Naive thymus-derived CD4-positive, alpha-beta T cell (primary cell): ENCODE measurements at regions of chr3 and their contacts with region 1.

Region 1: DNA sequence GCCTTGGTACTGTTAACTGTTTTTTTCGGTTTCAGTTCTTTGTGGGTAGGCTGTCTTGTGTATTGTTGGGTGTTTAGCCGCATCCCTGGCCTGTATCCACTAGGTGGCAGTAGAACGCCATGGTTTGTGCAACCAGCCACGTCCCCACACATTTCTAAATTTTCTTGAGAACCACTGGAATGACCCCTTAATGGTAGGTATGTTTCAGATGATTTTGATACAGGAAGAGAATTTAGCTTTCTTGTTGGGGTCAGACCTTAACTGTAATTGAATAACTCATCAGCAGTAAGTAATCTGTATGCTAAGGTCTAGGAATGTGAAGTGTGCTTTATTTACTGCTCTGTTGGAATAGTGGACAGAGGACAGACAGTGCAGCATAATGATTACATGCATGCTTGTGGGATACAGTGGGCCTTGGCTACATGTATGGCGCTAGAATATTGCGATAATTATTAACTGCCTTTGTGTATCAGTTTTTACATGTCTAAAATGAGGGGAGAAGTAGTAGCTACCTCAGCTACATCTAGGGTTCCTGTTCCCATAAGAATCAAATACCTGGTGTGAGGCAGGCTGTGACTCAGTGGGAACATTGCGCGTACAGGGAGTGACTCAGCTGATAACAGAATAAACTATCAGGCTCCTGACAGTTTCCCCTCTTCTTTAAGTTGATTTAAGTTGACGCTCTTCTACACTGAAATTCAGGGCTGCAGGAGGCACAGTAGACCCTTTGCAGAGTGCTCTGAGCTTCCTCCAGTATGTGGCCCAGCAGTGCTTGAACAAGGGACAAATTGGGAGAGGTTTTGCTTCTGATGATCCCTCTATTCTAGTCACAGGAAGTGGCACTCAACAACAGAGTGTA is 25.0 kb upstream of the GPR171 start:
- DNase-seq: peak; percentile 47 to 84 (median 77)
- ATAC-seq: peak; percentile 93
- H3K4me3 ChIP-seq: no peak overlapping the region
- H3K4me3 Mint-ChIP-seq: peak overlapping the region in 7 of 10 donors; percentile 6 to 68 (median 35)
- H3K27ac ChIP-seq: no peak overlapping the region
- H3K27ac Mint-ChIP-seq: peak overlapping the region in 8 of 9 donors; percentile 6 to 84 (median 51)
- H3K4me1 ChIP-seq: peaks cover 0 to 9% of the 10 kb centered on the region in 2 donors
- H3K4me1 Mint-ChIP-seq: peaks cover 19 to 63% (median 43%) of the 10 kb centered on the region in 7 donors
- H3K27me3 ChIP-seq: no peaks in the 10 kb centered on the region
- H3K27me3 Mint-ChIP-seq: no peaks in the 10 kb centered on the region

Region 2: DNA sequence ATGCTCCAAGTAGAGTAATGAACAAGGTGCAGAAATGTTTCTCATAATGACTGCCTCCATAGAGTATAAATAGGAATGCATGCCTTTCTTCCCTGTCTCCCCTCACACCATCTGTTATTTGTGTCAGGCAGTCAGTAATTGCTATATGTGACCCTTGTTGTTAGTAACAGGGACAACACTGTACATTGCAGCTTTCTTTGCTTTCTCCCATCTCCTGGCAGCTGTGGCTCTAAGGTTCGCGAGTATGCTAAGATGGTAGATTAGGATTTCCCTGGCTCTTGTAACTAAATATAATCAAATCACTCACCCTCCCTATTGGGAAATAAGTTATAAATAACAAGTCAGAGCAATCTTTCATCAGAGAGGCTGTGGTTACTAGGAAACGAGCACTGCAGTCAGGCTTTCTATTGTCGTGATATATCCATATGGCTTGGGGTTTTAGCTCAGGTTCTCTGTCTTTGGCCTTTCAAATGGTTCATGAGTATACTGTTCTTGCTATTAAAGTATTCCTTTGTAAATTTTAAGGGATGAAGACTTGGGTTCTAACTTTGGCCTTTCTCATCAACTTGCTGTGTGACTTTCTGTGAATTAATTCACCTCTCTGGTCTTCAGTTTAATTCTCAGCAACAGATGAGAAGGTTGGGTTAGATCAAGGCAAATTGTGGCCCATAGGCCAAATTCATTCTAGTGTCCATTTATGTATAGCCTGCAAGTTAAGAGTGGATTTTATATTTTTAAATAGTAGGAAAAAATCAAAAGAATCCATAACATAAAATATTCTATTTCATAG is 314.7 kb before region 1 on chr3:
- CTCF ChIA-PET with region 1: no interaction called
- POLR2A ChIA-PET with region 1: no interaction called
- intact Hi-C with region 1: no loop called
- DNase-seq: no peak
- ATAC-seq: no peak
- H3K4me3 ChIP-seq: no peak overlapping the region
- H3K4me3 Mint-ChIP-seq: no peak overlapping the region
- H3K27ac ChIP-seq: no peak overlapping the region
- H3K27ac Mint-ChIP-seq: no peak overlapping the region
- H3K4me1 ChIP-seq: no peaks in the 10 kb centered on the region
- H3K4me1 Mint-ChIP-seq: peaks cover 0 to 3% (median 0%) of the 10 kb centered on the region in 7 donors
- H3K27me3 ChIP-seq: no peaks in the 10 kb centered on the region
- H3K27me3 Mint-ChIP-seq: peaks cover 5 to 38% (median 14%) of the 10 kb centered on the region in 5 donors

Region 3: GRCh38 chr3:151168269-151169094 is 59.6 kb before region 1 on chr3:
- CTCF ChIA-PET with region 1: interaction called, 41 read pairs
- POLR2A ChIA-PET with region 1: interaction called, 13 read pairs
- intact Hi-C with region 1: loop called (anchors 1 kb)
- DNase-seq: peak; percentile 55 to 79 (median 68)
- ATAC-seq: peak; percentile 77
- H3K4me3 ChIP-seq: no peak overlapping the region
- H3K4me3 Mint-ChIP-seq: no peak overlapping the region
- H3K27ac ChIP-seq: no peak overlapping the region
- H3K27ac Mint-ChIP-seq: peak overlapping the region in 1 of 9 donors; percentile 31
- H3K4me1 ChIP-seq: peaks cover 24 to 30% of the 10 kb centered on the region in 2 donors
- H3K4me1 Mint-ChIP-seq: peaks cover 28 to 48% (median 40%) of the 10 kb centered on the region in 7 donors
- H3K27me3 ChIP-seq: no peaks in the 10 kb centered on the region
- H3K27me3 Mint-ChIP-seq: no peaks in the 10 kb centered on the region

Region 4: DNA sequence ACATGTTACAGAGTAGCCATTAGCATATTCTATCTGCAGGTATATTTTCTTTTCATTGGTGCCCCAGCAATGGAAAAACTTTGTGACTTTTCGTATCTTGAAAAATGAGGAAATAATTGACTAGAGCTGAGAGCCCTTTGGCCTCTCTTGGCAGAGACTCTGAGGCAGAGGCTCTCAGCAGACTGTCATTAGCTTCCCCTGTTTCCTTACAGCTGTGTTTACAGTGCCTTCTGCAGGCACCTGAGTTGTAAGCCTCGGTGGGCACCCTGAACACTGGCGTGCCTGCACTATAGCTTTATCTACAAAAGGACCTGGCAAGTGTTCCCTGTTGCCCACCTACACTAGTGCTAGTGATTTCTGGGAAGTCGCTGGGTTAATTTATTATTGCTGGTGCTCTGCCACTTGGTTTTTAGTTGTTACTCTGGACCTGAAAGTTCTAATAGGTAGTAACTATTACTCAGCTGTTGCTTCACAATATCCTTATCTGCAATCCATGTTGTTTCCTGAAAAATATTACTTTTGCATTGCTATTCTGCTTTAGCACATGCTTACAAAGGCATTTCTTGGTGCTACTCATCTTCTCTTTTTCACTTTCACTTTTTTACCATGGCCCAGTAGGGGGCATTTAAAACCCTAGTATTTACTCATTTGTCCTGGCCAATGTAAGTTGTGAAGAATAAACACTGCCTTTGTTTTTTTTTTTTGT is 17.2 kb before region 1 on chr3:
- CTCF ChIA-PET with region 1: interaction called, 27 read pairs
- POLR2A ChIA-PET with region 1: interaction called, 3 read pairs
- intact Hi-C with region 1: loop called (anchors 1 kb)
- DNase-seq: no peak
- ATAC-seq: peak; percentile 49
- H3K4me3 ChIP-seq: no peak overlapping the region
- H3K4me3 Mint-ChIP-seq: peak overlapping the region; percentile 6 to 83 (median 62)
- H3K27ac ChIP-seq: no peak overlapping the region
- H3K27ac Mint-ChIP-seq: peak overlapping the region; percentile 77 to 93 (median 83)
- H3K4me1 ChIP-seq: peaks cover 24 to 31% of the 10 kb centered on the region in 2 donors
- H3K4me1 Mint-ChIP-seq: peaks cover 18 to 54% (median 46%) of the 10 kb centered on the region in 7 donors
- H3K27me3 ChIP-seq: no peaks in the 10 kb centered on the region
- H3K27me3 Mint-ChIP-seq: no peaks in the 10 kb centered on the region

Region 5: GRCh38 chr3:151282921-151283320 is 54.9 kb after region 1 on chr3:
- CTCF ChIA-PET with region 1: interaction called, 133 read pairs
- POLR2A ChIA-PET with region 1: interaction called, 39 read pairs
- intact Hi-C with region 1: loop called (anchors 1 kb)
- DNase-seq: peak in 7 of 9 donors; percentile 39 to 74 (median 68)
- ATAC-seq: peak; percentile 76
- H3K4me3 ChIP-seq: no peak overlapping the region
- H3K4me3 Mint-ChIP-seq: peak overlapping the region in 1 of 10 donors; percentile 41
- H3K27ac ChIP-seq: no peak overlapping the region
- H3K27ac Mint-ChIP-seq: peak overlapping the region in 1 of 9 donors; percentile 56
- H3K4me1 ChIP-seq: peaks cover 6 to 9% of the 10 kb centered on the region in 2 donors
- H3K4me1 Mint-ChIP-seq: peaks cover 7 to 57% (median 18%) of the 10 kb centered on the region in 7 donors
- H3K27me3 ChIP-seq: no peaks in the 10 kb centered on the region
- H3K27me3 Mint-ChIP-seq: no peaks in the 10 kb centered on the region

Region 6: DNA sequence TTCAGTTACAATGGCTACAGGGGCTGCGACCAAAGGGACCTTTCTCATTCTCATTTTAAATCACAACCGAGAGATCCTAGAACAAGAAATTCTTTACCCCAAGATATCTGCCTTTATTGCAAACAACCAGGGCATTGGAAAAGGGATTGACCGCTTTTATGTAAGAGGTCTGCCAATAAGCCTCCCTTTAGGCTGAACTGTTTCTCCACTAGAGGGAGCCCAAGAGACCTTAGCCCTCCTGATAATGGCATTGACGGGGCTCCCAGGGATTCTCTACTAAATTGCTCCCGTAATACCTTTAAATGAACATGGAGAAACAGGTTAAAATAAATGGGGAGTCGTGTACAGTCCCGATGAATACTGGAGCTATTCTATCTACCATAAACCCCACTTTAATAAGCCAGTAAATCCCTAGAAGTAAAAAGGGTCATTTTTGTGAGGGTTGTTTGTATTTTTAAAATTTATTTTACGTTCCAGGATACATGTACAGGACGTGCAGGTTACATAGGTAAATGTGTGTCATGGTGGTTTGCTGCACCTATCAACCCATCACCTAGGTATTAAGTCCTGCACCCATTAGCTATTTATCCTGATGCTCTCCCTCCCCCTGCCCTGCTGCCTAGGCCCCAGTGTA is 240.4 kb after region 1 on chr3:
- CTCF ChIA-PET with region 1: no interaction called
- POLR2A ChIA-PET with region 1: no interaction called
- intact Hi-C with region 1: loop called in 1 of 2 experiments (anchors 2 kb)
- DNase-seq: peak in 7 of 9 donors; percentile 14 to 64 (median 31)
- ATAC-seq: peak; percentile 67
- H3K4me3 ChIP-seq: no peak overlapping the region
- H3K4me3 Mint-ChIP-seq: no peak overlapping the region
- H3K27ac ChIP-seq: no peak overlapping the region
- H3K27ac Mint-ChIP-seq: no peak overlapping the region
- H3K4me1 ChIP-seq: no peaks in the 10 kb centered on the region
- H3K4me1 Mint-ChIP-seq: no peaks in the 10 kb centered on the region
- H3K27me3 ChIP-seq: no peaks in the 10 kb centered on the region
- H3K27me3 Mint-ChIP-seq: peaks cover 10 to 22% (median 12%) of the 10 kb centered on the region in 5 donors

Region 7: GRCh38 chr3:152524198-152525140 is 1296.4 kb after region 1 on chr3:
- CTCF ChIA-PET with region 1: no interaction called
- POLR2A ChIA-PET with region 1: no interaction called
- intact Hi-C with region 1: loop called in 1 of 2 experiments (anchors 1 kb)
- DNase-seq: peak in 6 of 9 donors; percentile 15 to 55 (median 44)
- ATAC-seq: peak; percentile 68
- H3K4me3 ChIP-seq: no peak overlapping the region
- H3K4me3 Mint-ChIP-seq: no peak overlapping the region
- H3K27ac ChIP-seq: no peak overlapping the region
- H3K27ac Mint-ChIP-seq: no peak overlapping the region
- H3K4me1 ChIP-seq: no peaks in the 10 kb centered on the region
- H3K4me1 Mint-ChIP-seq: no peaks in the 10 kb centered on the region
- H3K27me3 ChIP-seq: no peaks in the 10 kb centered on the region
- H3K27me3 Mint-ChIP-seq: peaks cover 0 to 12% (median 0%) of the 10 kb centered on the region in 5 donors